Activated CD4-positive, alpha-beta T cell treated with anti-CD3 and anti-CD28 coated beads for 36 hours (primary cell): ENCODE measurements at regions of chr3 and their contacts with region 1.

Region 1: GRCh38 chr3:150408221-150409102 is at the start of gene TSC22D2:
- DNase-seq: peak; percentile 96
- ATAC-seq: peak; percentile 73
- H3K4me3 Mint-ChIP-seq: peak within 1 kb of the TSS; percentile 77
- H3K27ac Mint-ChIP-seq: peak within 1 kb of the TSS; percentile 100
- H3K4me1 Mint-ChIP-seq: peaks cover 21% of the 10 kb centered on the region
- H3K27me3 Mint-ChIP-seq: no peaks in the 10 kb centered on the region
- total RNA-seq, gene TSC22D2: 12.0 to 20.2 TPM

Region 2: DNA sequence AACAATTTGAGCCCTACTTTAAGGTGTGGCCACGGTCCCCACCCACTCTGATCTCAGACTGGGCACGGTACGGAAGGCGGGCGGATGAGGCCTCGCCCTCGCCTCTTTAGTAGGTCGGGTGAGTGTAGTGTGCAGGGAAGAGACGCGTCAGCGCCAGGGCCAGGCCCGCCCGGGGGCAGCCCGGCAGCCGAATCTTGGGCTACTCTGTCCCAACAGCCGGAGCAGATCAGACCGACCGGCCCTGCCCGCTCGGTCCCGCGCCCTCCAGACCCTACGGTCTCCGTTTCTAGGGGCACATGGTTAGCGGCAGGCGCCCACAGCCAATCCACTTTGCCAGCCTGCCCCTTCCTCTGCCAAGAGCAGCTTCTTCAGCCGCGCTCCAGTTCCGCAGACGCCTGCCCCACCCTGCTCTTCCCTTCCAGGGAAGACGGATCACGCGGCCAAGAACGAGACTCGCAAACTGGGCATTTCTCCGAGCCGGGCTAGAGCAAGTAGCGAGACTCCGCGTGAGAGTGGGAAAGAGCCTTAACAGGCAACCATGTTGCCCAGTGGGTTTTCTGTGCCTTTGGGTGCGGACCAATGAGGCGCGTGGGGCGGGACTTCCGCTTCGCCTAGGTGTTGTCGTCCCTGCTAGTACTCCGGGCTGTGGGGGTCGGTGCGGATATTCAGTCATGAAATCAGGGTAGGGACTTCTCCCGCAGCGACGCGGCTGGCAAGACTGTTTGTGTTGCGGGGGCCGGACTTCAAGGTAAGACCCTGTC is 595.7 kb before region 1 on chr3 and contains the start of gene RNF13:
- CTCF ChIA-PET with region 1: interaction called, 3 read pairs
- POLR2A ChIA-PET with region 1: no interaction called
- intact Hi-C with region 1: loop called in 1 of 2 experiments (anchors 1 kb)
- DNase-seq: peak; percentile 96
- ATAC-seq: peak; percentile 95
- H3K4me3 Mint-ChIP-seq: peak within 1 kb of the TSS; percentile 95
- H3K27ac Mint-ChIP-seq: peak within 1 kb of the TSS; percentile 100
- H3K4me1 Mint-ChIP-seq: peaks cover 46% of the 10 kb centered on the region
- H3K27me3 Mint-ChIP-seq: peaks cover 3% of the 10 kb centered on the region
- total RNA-seq, gene RNF13: 28.8 to 41.2 TPM

Region 3: GRCh38 chr3:150286390-150287147 is 121.9 kb before region 1 on chr3:
- CTCF ChIA-PET with region 1: no interaction called
- POLR2A ChIA-PET with region 1: no interaction called
- intact Hi-C with region 1: loop called in 1 of 2 experiments (anchors 5 kb)
- DNase-seq: peak; percentile 9
- ATAC-seq: peak; percentile 58
- H3K4me3 Mint-ChIP-seq: no peak overlapping the region
- H3K27ac Mint-ChIP-seq: no peak overlapping the region
- H3K4me1 Mint-ChIP-seq: no peaks in the 10 kb centered on the region
- H3K27me3 Mint-ChIP-seq: peaks cover 14% of the 10 kb centered on the region

Region 4: DNA sequence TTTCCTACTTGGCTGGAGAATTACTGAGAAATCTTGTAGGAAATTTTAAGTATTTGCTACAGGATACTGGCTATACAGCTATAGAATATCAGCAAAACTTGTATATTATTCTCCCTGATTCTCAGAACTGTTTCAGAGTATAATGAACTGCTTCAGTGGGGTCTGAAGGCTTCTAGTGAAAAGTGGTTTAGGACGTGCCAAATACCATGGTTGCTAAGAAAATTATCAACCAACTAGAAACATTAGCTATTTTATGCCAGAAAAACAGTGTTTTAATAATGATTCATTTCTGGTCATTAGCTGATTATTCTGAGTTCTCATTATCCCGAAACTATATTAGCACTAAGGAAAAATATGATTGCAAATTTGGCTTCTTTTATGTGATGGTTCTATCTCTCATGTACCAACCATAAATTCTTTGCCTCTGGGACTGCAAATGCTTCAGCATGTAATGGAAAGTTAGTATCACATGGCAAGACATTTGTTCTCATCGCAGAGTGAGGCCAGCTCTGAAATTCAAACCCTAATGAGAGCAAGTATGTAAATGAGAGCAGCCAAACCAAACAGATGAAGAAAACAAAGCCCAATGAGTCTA is 11.4 kb before region 1 on chr3:
- CTCF ChIA-PET with region 1: interaction called, 12 read pairs
- POLR2A ChIA-PET with region 1: no interaction called
- intact Hi-C with region 1: no loop called
- DNase-seq: no peak
- ATAC-seq: no peak
- H3K4me3 Mint-ChIP-seq: no peak overlapping the region
- H3K27ac Mint-ChIP-seq: no peak overlapping the region
- H3K4me1 Mint-ChIP-seq: no peaks in the 10 kb centered on the region
- H3K27me3 Mint-ChIP-seq: no peaks in the 10 kb centered on the region

Region 5: GRCh38 chr3:150546226-150547044 is 138.0 kb after region 1 on chr3 and contains the starts of genes EIF2A and SERP1:
- CTCF ChIA-PET with region 1: no interaction called
- POLR2A ChIA-PET with region 1: interaction called, 4 read pairs
- intact Hi-C with region 1: loop called (anchors 1 kb)
- DNase-seq: peak; percentile 99
- ATAC-seq: peak; percentile 92
- H3K4me3 Mint-ChIP-seq: peak within 1 kb of the TSS; percentile 90
- H3K27ac Mint-ChIP-seq: peak within 1 kb of the TSS; percentile 96
- H3K4me1 Mint-ChIP-seq: peaks cover 68% of the 10 kb centered on the region
- H3K27me3 Mint-ChIP-seq: no peaks in the 10 kb centered on the region
- total RNA-seq, gene EIF2A: 119 to 182 TPM
- total RNA-seq, gene SERP1: 84.6 to 96.1 TPM

Region 6: DNA sequence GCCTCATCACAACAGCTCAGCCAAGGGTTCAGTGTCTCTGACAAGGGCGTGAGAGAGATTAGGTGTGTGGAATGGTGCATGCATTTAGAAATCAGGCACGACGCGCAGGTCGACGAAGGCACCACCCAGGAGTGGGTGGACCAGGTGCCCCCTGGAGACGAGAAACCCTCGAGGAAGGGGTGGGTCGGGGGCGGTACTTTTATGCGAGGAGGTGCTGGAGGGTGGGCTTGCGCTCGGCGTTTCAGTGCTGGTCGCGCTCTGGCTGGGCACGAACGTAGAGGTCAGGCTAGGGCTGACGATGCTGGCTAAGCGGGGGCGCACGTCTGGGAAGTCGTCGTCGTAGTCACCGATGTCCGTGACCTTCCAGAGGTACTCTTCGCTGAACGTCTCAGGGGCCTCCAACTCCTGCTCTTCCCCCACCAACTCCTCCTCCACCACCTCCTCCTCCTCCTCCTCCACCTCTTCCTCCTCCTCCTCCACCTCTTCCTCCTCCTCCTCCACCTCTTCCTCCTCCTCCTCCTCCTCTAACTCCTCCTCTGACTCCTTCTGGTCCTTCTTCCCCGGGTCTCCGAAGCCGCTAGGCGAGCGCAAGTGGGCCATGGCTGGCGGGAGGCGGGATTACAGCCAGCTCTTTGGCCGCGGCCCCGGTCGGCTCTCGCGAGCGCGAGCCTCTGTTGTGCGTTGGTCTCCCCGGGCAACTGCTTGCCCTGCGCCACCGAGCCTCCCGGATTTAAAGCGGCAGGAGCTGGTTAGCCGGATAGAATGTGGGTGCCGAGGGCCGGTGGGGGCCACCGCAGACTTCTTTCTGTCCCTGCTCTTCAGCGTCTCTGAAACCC is 295.1 kb after region 1 on chr3 and contains the start of gene ERICH6:
- CTCF ChIA-PET with region 1: no interaction called
- POLR2A ChIA-PET with region 1: no interaction called
- intact Hi-C with region 1: loop called in 1 of 2 experiments (anchors 1 kb)
- DNase-seq: peak; percentile 93
- ATAC-seq: peak; percentile 96
- H3K4me3 Mint-ChIP-seq: peak within 1 kb of the TSS; percentile 87
- H3K27ac Mint-ChIP-seq: peak within 1 kb of the TSS; percentile 91
- H3K4me1 Mint-ChIP-seq: peaks cover 31% of the 10 kb centered on the region
- H3K27me3 Mint-ChIP-seq: no peaks in the 10 kb centered on the region
- total RNA-seq, gene ERICH6: 0.58 TPM in 1 of 2 experiments, not detected in the other

Region 7: GRCh38 chr3:150875548-150875947 is 467.1 kb after region 1 on chr3:
- CTCF ChIA-PET with region 1: no interaction called
- POLR2A ChIA-PET with region 1: no interaction called
- intact Hi-C with region 1: no loop called
- DNase-seq: no peak
- ATAC-seq: peak; percentile 74
- H3K4me3 Mint-ChIP-seq: no peak overlapping the region
- H3K27ac Mint-ChIP-seq: no peak overlapping the region
- H3K4me1 Mint-ChIP-seq: peaks cover 5% of the 10 kb centered on the region
- H3K27me3 Mint-ChIP-seq: peaks cover 5% of the 10 kb centered on the region

Region 8: GRCh38 chr3:151316267-151316991 is 908.0 kb after region 1 on chr3 and contains the start of gene GPR87:
- CTCF ChIA-PET with region 1: no interaction called
- POLR2A ChIA-PET with region 1: no interaction called
- intact Hi-C with region 1: loop called in 1 of 2 experiments (anchors 5 kb)
- DNase-seq: peak; percentile 50
- ATAC-seq: peak; percentile 83
- H3K4me3 Mint-ChIP-seq: peak within 1 kb of the TSS; percentile 50
- H3K27ac Mint-ChIP-seq: peak within 1 kb of the TSS; percentile 90
- H3K4me1 Mint-ChIP-seq: peaks cover 47% of the 10 kb centered on the region
- H3K27me3 Mint-ChIP-seq: peaks cover 2% of the 10 kb centered on the region
- total RNA-seq, gene GPR87: 2.3 to 2.5 TPM